ENCODE measurements at regions of chr20 and their contacts with region 1.

Region 1: GRCh38 chr20:49484180-49485140 is 2.0 kb upstream of the KCNB1 start:
- DNase-seq: peak; percentile 83 to 86
- ATAC-seq: peak; percentile 91 to 98
- H3K4me3 ChIP-seq: peak overlapping the region; percentile 51
- H3K27ac ChIP-seq: peak overlapping the region; percentile 48 to 67; a peak in 4 of 6 replicates
- H3K4me1 ChIP-seq: peaks cover 11% of the 10 kb centered on the region; the same call in 2 of the 3 replicates
- CTCF ChIP-seq: peak; percentile 89
- EP300 ChIP-seq: no peak
- POLR2A ChIP-seq: no peak
- RAD21 ChIP-seq: peak; percentile 75 to 92

Region 2: DNA sequence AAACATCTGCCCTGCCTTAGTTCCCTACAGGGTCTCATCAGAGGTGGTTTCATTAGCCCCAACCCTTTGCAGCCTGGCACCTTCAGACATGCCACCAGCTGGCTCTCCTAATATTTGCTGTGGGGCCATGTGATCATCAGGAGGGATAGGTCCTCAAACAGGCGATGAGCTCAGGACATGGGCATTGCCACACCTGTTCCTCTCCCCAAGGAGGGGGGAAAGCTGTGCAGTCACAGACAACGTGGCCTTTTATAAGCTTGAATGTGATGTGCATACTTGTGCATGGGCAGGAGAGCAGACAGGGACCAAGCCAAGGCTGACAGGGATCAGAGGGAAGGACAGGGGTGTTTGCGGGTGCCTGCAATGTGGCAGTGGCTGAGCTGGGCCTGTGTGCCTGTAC is 127.8 kb before region 1 on chr20:
- CTCF ChIA-PET with region 1: interaction called, 24 read pairs
- POLR2A ChIA-PET with region 1: no interaction called
- DNase-seq: no peak
- ATAC-seq: peak in 1 of 2 experiments; percentile 17; a peak in 1 of 6 replicates
- H3K4me3 ChIP-seq: no peak overlapping the region
- H3K27ac ChIP-seq: no peak overlapping the region; a peak in 1 of 6 replicates
- H3K4me1 ChIP-seq: peaks cover 21% of the 10 kb centered on the region; the same call in 2 of the 3 replicates
- CTCF ChIP-seq: no peak
- EP300 ChIP-seq: no peak
- POLR2A ChIP-seq: no peak
- RAD21 ChIP-seq: no peak

Region 3: GRCh38 chr20:49435659-49436058 is 48.8 kb before region 1 on chr20:
- CTCF ChIA-PET with region 1: interaction called, 10 read pairs
- POLR2A ChIA-PET with region 1: no interaction called
- DNase-seq: no peak
- ATAC-seq: peak in 1 of 2 experiments; percentile 32; a peak in 1 of 6 replicates
- H3K4me3 ChIP-seq: no peak overlapping the region
- H3K27ac ChIP-seq: no peak overlapping the region
- H3K4me1 ChIP-seq: peaks cover 11% of the 10 kb centered on the region
- CTCF ChIP-seq: no peak
- EP300 ChIP-seq: no peak
- POLR2A ChIP-seq: no peak
- RAD21 ChIP-seq: 0 out of 5 replicates have a peak, but pooled peaks of 1 of the 2 experiments have one; percentile 35

Region 4: DNA sequence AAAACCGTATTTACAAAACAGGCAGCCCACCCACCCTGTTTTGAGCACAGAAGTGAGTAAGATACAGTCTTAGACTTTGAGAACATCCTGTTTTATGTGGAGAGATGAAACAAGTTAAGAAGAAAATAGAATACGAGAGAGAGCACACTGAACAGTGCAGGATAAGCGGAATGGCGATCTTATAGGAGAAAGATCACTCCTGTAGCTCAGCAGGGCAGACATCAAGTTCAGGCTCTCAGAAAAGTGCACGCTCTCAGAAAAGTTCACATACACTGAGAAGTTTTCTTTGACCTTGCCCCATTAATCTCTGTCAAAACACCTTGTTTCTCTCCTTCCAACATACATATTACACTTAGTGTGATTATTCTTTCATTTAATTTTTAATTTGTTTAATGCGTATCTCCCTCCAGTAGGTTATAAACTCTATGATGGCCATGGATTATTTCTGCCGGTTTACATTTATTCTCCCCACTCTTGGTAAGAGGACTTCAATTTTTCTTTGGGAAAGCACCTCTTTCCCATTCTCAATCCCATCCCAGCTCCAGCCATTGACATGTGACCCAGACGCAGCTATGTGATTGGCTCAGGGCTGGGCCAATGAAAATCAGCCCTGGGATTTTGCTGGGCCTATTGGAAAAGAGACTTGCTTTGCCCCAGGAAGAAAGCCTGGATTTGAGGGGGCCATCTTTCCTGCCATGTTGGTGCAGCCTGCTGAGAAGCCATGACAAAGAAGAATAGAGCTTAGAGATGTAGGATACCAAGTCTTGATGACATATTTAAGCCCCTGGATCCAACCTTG is 18.1 kb before region 1 on chr20:
- CTCF ChIA-PET with region 1: interaction called, 21 read pairs
- POLR2A ChIA-PET with region 1: no interaction called
- DNase-seq: no peak
- ATAC-seq: no peak
- H3K4me3 ChIP-seq: no peak overlapping the region
- H3K27ac ChIP-seq: no peak overlapping the region
- H3K4me1 ChIP-seq: no peaks in the 10 kb centered on the region
- CTCF ChIP-seq: no peak
- EP300 ChIP-seq: no peak
- POLR2A ChIP-seq: no peak
- RAD21 ChIP-seq: no peak

Region 5: DNA sequence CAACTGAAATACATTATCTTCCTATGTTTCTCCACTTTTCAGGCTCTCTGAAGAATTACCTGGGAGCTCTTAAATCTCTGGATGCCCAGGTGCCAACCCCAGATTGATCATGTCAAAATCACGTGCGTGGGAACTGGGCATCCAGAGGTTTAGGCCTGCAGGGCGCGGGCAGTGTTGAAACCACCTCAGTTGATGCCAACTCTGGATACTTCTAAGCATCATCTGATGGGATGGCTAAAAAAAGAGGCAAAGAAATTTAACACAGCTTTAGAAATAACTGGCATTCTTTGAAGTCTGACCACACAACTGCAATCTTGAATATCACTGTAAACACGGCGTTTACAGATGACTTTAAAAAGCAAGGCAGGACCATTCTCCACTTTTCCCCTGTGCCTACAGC is 41.6 kb after region 1 on chr20:
- CTCF ChIA-PET with region 1: interaction called, 10 read pairs
- POLR2A ChIA-PET with region 1: no interaction called
- DNase-seq: no peak
- ATAC-seq: no peak
- H3K4me3 ChIP-seq: no peak overlapping the region
- H3K27ac ChIP-seq: no peak overlapping the region
- H3K4me1 ChIP-seq: no peaks in the 10 kb centered on the region
- CTCF ChIP-seq: no peak
- EP300 ChIP-seq: no peak
- POLR2A ChIP-seq: no peak
- RAD21 ChIP-seq: no peak

Region 6: DNA sequence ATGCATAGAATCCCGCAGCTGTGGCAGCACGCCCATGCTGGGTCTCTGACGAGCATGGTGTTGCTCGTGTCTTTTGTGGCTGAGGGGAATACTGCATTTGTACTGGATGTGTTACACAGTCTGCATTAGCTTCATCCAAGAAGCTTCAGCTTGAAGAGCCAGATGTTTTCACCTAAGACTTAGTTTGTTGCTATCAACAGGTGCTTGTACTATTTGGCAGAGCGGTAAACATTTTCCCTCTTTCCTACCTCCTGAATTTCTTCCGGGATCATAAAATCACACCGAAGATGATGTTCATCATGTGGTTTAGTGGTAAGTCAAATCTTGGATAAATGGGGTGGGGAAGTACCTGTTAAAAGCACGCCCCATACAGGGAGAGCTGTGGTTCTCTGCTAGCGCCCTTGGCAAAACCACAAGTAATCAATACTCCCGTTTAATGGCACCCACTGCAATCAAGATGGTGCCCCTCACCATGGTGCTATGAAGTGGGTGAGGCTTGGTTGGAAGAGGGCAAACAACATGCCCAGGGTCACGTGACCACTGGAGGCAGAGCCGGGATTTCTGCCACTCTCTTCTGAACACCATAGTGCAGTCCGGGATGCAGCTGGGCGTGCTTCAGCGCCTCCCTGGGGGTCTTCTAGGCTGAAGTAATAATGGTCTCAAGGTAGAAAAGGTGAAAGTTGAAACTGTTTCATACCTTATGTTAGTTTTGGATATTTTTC is 396.4 kb after region 1 on chr20:
- CTCF ChIA-PET with region 1: no interaction called
- POLR2A ChIA-PET with region 1: no interaction called
- DNase-seq: no peak
- ATAC-seq: no peak
- H3K4me3 ChIP-seq: no peak overlapping the region
- H3K27ac ChIP-seq: no peak overlapping the region
- H3K4me1 ChIP-seq: peaks cover 6% of the 10 kb centered on the region
- CTCF ChIP-seq: no peak
- EP300 ChIP-seq: no peak
- POLR2A ChIP-seq: no peak
- RAD21 ChIP-seq: no peak

Measured in A549 (cell line).